ENCODE measurements at regions of chr1 and their contacts with region 1.

Region 1: DNA sequence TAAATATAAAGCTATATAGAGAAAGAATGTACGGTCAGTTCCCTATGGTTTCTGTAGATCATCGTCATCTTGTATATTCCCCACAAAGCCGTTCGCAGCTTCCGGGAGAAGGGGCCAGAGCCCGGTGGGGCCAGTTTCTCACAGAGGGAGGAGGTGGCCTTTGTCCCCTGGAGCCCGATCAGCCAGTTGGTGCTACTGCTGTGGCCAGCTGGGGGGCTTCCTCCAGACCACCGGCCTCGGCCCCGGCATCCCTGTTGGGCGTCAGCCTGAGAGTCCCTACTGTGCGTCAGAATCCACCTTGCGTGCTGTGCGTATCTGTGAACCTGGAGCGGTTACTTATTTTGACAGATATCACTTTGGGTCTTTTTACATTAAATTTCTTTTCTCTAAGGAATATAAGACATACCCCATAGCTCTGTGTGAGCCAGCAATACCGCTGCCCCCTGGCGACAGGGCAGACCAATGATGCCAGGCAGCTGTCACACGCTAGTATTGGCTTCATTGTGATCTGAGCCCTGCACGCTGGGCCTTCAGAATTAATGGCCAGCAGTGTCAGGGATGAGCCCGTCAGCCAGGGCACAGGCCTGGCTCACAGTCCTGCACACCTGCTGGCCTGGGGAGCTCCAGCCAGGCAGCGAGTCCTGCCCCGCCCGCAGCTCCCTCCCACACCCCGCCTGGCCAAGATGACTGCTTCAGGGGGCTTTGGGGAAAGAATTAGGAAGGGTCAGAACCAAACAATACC is 145.9 kb downstream of the PGBD5 start:
- DNase-seq: peak; percentile 29 to 62 (median 54)
- H3K4me3 ChIP-seq: no peak overlapping the region
- H3K27ac ChIP-seq: peak overlapping the region in 1 of 2 experiments; percentile 58
- H3K4me1 ChIP-seq: peaks cover 11 to 70% (median 62%) of the 10 kb centered on the region in 4 experiments
- H3K27me3 ChIP-seq: no peaks in the 10 kb centered on the region

Region 2: DNA sequence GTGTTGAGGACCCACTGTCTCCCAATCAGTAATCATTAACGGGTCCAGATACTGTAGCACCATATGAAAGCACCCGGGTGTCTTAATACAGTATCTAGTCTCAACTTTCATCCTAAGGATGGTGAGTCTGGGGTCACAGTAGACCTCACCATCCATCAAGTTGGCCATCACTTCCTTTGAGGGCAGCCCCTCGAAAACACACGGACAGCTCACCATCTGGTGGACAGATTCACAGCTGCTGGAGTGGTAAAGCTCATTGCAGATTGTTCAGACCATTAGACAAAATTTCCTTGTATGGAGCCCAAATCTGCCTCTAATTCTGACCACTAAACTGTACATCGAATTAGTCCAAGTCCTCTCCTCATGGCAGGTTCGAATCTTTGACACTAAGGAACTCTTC is 22.8 kb after region 1 on chr1:
- CTCF ChIA-PET with region 1: interaction called, 10 read pairs
- POLR2A ChIA-PET with region 1: no interaction called
- DNase-seq: peak in 2 of 3 donors; percentile 35 to 54
- H3K4me3 ChIP-seq: no peak overlapping the region
- H3K27ac ChIP-seq: no peak overlapping the region
- H3K4me1 ChIP-seq: peaks cover 0 to 7% (median 5%) of the 10 kb centered on the region in 4 experiments
- H3K27me3 ChIP-seq: no peaks in the 10 kb centered on the region

Measured in common myeloid progenitor, CD34-positive (primary cell).